Activated B cell treated with CpG ODN at 0.5 μM for 24 hours (primary cell): ENCODE measurements at regions of chr3 and their contacts with region 1.

Region 1: DNA sequence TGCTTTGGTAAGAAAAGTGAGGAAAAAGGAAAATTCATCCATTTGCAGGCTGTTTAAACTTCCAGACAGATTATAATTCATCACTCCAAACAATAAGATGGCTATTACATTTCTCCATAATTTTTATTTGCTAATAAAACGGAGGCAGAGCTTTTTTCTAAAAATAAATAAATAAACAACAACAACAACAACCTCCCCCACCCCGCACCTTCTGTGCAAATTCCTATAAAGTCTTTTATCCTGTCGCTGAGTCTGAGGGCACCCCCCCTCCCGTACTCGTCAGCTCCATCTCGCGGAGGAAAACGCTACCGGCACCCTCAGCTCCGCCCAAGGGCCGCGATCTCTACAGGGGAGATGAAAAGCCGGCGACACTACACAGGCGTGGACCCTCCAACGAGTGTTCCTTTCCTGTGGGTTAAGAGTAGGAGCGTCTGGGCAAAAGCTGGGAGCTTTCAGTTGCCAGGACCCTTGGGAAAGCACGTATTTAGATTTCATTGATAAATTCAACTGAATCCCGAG is 1.0 kb upstream of the ATP1B3 start:
- DNase-seq: peak; percentile 72
- ATAC-seq: peak; percentile 64
- H3K4me3 Mint-ChIP-seq: peak overlapping the region; percentile 93
- H3K27ac Mint-ChIP-seq: peak overlapping the region; percentile 93
- H3K4me1 Mint-ChIP-seq: peaks cover 28% of the 10 kb centered on the region
- H3K27me3 Mint-ChIP-seq: no peaks in the 10 kb centered on the region
- CTCF ChIP-seq: no peak

Region 2: GRCh38 chr3:141231101-141231935 is 644.1 kb before region 1 on chr3 and contains the start of gene PXYLP1:
- CTCF ChIA-PET with region 1: no interaction called
- POLR2A ChIA-PET with region 1: no interaction called
- intact Hi-C with region 1: loop called (anchors 10 kb)
- DNase-seq: peak; percentile 91
- ATAC-seq: peak; percentile 96
- H3K4me3 Mint-ChIP-seq: peak within 1 kb of the TSS; percentile 93
- H3K27ac Mint-ChIP-seq: peak within 1 kb of the TSS; percentile 94
- H3K4me1 Mint-ChIP-seq: peaks cover 16% of the 10 kb centered on the region
- H3K27me3 Mint-ChIP-seq: no peaks in the 10 kb centered on the region
- CTCF ChIP-seq: no peak
- total RNA-seq, gene PXYLP1: 2.3 and 2.7 TPM in 2 replicates

Region 3: DNA sequence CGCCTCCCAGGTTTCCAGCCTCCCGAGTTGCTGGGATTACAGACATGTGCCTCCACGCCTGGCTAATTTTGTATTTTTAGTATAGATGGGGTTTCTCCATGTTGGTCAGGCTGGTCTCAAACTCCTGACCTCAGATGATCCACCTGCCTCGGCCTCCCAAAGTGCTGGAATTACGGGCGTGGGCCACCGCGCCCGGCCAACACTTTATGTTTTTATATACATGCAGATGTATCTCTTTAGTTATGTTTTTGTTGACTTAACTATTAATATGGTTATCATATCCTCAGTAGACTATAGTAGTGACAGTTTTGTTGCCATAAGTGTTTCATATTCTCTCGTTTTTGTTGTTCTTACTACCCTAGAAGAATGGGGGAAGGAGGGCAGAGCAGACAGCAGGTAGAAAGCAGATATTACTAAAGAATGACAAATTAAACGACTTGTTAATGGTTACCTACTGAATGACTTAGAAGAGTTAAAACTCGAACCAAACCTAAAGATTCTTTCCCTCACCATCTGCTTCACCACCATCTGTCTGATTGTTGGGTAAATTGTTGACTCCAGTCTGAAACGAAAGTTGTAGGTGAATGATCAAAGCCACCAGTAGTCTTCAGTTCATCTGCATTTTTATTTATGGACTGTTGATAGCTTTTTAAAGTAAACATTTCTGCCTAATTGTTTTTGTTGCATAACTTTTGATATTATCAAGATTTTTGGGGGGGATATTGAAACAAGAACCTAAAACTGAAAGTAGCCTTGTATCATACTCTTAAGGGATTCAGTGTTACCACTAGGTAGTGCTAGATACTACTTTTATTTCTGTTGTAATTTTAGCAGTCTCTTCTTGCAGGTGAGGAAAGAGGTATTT is 299.3 kb before region 1 on chr3:
- CTCF ChIA-PET with region 1: no interaction called
- POLR2A ChIA-PET with region 1: no interaction called
- intact Hi-C with region 1: loop called (anchors 1 kb)
- DNase-seq: no peak
- ATAC-seq: peak; percentile 47
- H3K4me3 Mint-ChIP-seq: no peak overlapping the region
- H3K27ac Mint-ChIP-seq: peak overlapping the region; percentile 19
- H3K4me1 Mint-ChIP-seq: peaks cover 5% of the 10 kb centered on the region
- H3K27me3 Mint-ChIP-seq: no peaks in the 10 kb centered on the region
- CTCF ChIP-seq: no peak

Region 4: DNA sequence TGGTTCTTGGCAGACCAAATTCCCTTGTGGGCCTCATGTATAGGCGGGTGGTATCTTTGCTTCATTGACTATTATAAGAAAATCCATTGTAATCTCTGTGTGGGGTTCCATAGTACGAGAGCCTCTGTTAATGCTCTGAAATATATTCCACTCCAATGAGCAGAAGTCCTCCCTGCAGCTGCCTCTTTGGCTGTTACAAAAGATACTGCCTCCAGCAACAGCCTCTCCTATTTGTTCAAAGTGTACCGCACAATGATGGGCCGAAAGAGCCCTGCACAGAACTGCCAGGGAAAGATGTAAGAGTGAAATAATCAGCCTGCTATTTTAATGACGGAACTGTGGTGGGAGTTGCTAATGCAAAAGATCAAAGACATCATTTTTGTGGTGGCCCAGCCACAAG is 63.3 kb before region 1 on chr3:
- CTCF ChIA-PET with region 1: no interaction called
- POLR2A ChIA-PET with region 1: no interaction called
- intact Hi-C with region 1: no loop called
- DNase-seq: no peak
- ATAC-seq: no peak
- H3K4me3 Mint-ChIP-seq: no peak overlapping the region
- H3K27ac Mint-ChIP-seq: no peak overlapping the region
- H3K4me1 Mint-ChIP-seq: no peaks in the 10 kb centered on the region
- H3K27me3 Mint-ChIP-seq: peaks cover 10% of the 10 kb centered on the region
- CTCF ChIP-seq: no peak

Region 5: DNA sequence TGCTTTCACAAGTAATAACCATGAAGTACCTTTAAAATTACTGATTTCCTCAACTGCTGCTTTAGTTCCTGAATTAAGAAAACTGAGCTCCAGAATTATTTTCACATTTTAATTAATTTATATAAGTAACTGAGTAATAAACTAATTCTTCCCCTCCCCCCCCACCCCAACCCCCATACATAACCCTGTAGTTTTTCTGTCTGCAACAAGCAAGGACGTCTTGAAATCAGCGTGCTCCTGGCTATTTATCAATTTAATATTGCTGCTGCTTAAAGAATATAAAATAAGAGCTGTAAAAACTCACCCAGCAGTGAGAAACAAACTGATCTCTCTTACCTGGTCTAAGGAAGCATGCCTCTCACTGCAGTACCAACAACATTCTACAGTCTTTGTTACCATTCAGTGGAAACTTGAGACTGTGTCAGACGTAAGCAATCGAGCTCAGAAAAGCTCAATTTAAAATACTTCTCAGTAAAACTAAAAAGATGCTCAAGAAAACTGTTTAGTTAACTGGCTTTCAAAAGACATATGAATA is 152.9 kb after region 1 on chr3:
- CTCF ChIA-PET with region 1: no interaction called
- POLR2A ChIA-PET with region 1: no interaction called
- intact Hi-C with region 1: loop called (anchors 2 kb)
- DNase-seq: no peak
- ATAC-seq: peak; percentile 87
- H3K4me3 Mint-ChIP-seq: peak overlapping the region; percentile 89
- H3K27ac Mint-ChIP-seq: peak overlapping the region; percentile 66
- H3K4me1 Mint-ChIP-seq: peaks cover 18% of the 10 kb centered on the region
- H3K27me3 Mint-ChIP-seq: no peaks in the 10 kb centered on the region
- CTCF ChIP-seq: no peak

Region 6: DNA sequence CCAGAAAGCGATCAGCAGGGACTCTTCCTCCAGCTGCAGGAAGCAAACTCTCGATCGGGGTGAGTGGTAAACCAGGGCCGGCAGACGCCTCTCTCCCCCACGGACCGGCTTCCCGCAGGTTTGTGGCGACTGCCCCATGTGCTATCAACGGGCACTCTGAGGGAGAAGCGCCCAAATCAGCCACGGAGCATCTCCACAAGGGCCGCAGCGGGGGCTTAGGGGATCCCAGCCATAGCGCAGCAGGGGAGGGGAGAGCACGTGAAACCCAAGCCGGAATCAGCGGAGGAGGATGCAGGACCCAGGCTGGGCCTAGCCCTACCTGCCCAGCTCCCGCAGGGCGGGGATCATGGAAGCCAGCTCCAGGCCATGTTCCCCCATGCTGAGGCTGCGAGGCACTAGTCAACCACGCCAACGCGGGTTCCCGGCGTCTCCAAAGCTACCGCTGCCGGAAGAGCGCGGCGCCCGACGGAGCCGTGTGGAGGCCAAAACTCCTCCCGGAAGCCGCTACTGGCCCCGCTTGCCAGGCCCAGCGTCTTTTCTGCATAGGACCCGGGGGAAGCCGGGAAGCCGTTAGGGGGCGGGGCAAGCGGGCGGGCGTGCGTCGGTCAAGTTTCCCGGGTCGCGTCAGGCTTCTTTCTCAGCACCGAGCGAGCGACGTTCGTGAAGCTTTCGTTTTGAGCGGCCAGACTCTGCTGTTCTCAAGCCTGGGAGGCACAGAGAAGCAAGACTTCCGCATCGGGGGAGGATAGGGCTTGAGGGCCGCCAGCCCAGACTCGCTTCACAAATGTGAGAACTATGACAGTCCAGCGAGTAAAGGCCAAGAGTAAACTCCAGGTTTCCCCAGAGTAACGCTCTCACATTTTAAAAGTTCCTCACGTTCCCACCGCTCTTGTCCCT is 703.1 kb after region 1 on chr3 and contains the start of gene ATR:
- CTCF ChIA-PET with region 1: no interaction called
- POLR2A ChIA-PET with region 1: no interaction called
- intact Hi-C with region 1: loop called (anchors 2 kb)
- DNase-seq: peak; percentile 92
- ATAC-seq: peak; percentile 95
- H3K4me3 Mint-ChIP-seq: peak within 1 kb of the TSS; percentile 96
- H3K27ac Mint-ChIP-seq: peak within 1 kb of the TSS; percentile 97
- H3K4me1 Mint-ChIP-seq: peaks cover 48% of the 10 kb centered on the region
- H3K27me3 Mint-ChIP-seq: peaks cover 5% of the 10 kb centered on the region
- CTCF ChIP-seq: no peak
- total RNA-seq, gene ATR: 47.4 and 47.6 TPM in 2 replicates